ENCODE measurements at regions of chr15 and their contacts with region 1.

Region 1: GRCh38 chr15:51737280-51738017 is at the start of gene LYSMD2:
- DNase-seq: peak; percentile 56 to 79 (median 75)
- H3K4me3 ChIP-seq: peak within 1 kb of the TSS; percentile 78
- H3K4me3 Mint-ChIP-seq: peak within 1 kb of the TSS; percentile 89 to 97 (median 94)
- H3K27ac ChIP-seq: peak within 1 kb of the TSS; percentile 71
- H3K27ac Mint-ChIP-seq: peak within 1 kb of the TSS; percentile 95 to 99 (median 98)
- H3K4me1 ChIP-seq: peaks cover 50% of the 10 kb centered on the region
- H3K4me1 Mint-ChIP-seq: peaks cover 50 to 61% (median 58%) of the 10 kb centered on the region in 3 donors
- H3K27me3 ChIP-seq: no peaks in the 10 kb centered on the region
- H3K27me3 Mint-ChIP-seq: no peaks in the 10 kb centered on the region
- total RNA-seq, gene LYSMD2: 25.1 TPM

Region 2: DNA sequence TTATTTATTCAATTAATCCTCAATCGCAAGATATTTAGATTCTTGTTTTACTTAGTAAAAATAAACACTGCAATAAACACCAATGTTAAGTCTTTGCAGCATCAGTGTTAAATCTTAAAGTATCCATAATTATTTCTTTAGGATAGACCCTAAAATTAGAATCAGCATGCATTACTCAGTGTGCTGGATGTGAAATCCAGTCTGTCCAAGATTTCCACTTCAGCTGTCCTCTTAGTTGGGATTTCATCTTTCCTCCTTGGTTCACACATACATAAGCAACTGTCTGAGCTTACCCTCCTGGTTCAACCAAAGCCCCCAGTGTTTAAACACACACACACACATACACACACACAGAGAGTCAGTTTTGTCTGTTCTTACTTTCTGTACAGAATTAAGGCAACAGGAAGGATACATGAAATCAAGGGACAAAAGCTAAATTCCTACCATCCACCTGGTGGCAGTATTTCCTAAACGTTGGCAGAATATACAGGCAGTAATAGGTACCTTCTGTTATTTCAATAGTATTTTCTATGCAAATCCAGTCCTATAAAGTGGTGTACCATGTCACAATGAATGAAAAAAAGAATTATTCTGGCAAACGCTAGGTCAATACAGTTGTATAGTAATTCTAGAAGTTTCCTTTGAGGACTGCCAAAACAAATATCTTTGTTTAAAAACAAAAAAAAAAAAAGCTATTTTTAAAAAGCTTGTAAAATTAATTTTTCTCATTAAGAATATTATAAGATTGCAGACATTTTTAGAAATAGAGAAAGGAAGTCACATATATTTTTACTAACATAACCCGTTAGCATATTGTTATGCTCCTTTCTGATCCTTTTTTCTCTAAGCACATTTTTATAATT is 87.6 kb before region 1 on chr15:
- CTCF ChIA-PET with region 1: interaction called, 23 read pairs
- POLR2A ChIA-PET with region 1: no interaction called
- DNase-seq: peak in 4 of 5 donors; percentile 6 to 65 (median 44)
- H3K4me3 ChIP-seq: no peak overlapping the region
- H3K4me3 Mint-ChIP-seq: no peak overlapping the region
- H3K27ac ChIP-seq: no peak overlapping the region
- H3K27ac Mint-ChIP-seq: no peak overlapping the region
- H3K4me1 ChIP-seq: no peaks in the 10 kb centered on the region
- H3K4me1 Mint-ChIP-seq: no peaks in the 10 kb centered on the region
- H3K27me3 ChIP-seq: no peaks in the 10 kb centered on the region
- H3K27me3 Mint-ChIP-seq: peaks cover 0 to 5% of the 10 kb centered on the region in 2 donors

Region 3: DNA sequence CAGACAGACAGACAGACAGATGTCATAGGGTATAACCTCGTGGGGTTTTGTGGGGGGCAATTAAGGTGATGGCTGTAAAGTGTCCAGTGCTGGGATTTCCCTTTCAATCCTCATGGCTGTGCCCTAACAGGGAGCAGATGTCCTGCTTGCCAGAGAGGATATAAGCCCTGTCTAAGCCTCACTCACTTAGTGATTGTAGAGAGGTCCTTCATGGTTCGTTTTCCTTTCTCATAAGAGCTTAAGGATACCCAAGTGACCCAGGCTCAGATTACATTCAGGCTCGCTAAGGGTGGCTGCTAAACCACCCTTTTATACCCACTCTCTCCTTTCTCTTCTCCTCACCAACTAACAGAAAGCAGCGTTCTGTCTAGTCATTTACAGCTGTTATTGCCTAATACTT is 19.2 kb before region 1 on chr15:
- CTCF ChIA-PET with region 1: no interaction called
- POLR2A ChIA-PET with region 1: no interaction called
- DNase-seq: no peak
- H3K4me3 ChIP-seq: no peak overlapping the region
- H3K4me3 Mint-ChIP-seq: no peak overlapping the region
- H3K27ac ChIP-seq: no peak overlapping the region
- H3K27ac Mint-ChIP-seq: peak overlapping the region in 5 of 8 donors; percentile 24 to 91 (median 84)
- H3K4me1 ChIP-seq: no peaks in the 10 kb centered on the region
- H3K4me1 Mint-ChIP-seq: peaks cover 7 to 21% (median 8%) of the 10 kb centered on the region in 3 donors
- H3K27me3 ChIP-seq: no peaks in the 10 kb centered on the region
- H3K27me3 Mint-ChIP-seq: no peaks in the 10 kb centered on the region

Region 4: DNA sequence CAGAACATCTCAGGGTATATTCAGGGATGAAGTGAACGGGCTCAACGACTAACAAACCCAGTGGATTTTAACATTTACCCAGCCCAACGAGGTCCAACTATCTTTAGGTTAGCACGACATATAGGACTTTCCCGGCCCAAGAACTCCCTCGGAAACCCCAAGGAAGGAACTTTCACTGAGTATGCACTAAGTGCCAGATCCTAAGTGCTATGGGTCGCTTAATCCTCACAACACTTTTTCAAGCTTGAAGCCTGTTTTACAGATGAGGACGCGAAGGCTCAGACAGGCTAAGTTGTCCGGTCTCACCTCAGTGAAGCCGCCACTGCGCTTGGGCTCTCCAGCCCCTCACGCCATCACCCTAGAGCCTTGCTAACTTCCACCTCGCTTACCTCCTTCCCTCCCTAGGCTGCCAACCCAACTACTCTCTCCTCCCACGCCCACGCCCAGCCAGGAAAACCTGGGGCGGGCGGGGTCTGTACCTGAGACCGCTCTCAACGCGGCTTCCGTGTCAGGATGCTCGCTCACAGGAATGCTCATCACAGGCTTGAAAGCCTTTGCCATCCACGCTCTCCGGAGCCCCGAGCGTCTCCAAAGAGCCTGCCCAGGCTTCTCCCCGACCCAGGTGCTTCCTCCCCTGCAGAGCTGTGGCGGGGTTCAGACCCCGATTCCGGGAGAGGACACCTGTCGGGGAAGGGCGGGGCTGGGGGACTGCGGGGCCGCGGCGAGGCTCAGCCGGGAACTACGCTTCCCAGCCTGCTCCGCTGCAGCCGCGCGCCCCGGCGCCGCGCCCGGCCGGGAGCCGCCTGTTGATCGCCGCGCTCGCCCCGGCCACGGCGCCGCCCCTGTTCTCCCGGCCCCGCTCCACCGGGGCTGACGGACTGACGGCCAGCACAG is 13.6 kb after region 1 on chr15 and contains the start of gene TMOD2:
- CTCF ChIA-PET with region 1: interaction called, 13 read pairs
- POLR2A ChIA-PET with region 1: interaction called, 21 read pairs
- DNase-seq: peak; percentile 23 to 63 (median 48)
- H3K4me3 ChIP-seq: peak within 1 kb of the TSS; percentile 53
- H3K4me3 Mint-ChIP-seq: peak within 1 kb of the TSS; percentile 87 to 93 (median 88)
- H3K27ac ChIP-seq: no peak within 1 kb of the TSS
- H3K27ac Mint-ChIP-seq: peak within 1 kb of the TSS in 7 of 8 donors; percentile 55 to 93 (median 67)
- H3K4me1 ChIP-seq: peaks cover 11% of the 10 kb centered on the region
- H3K4me1 Mint-ChIP-seq: peaks cover 40 to 49% (median 47%) of the 10 kb centered on the region in 3 donors
- H3K27me3 ChIP-seq: no peaks in the 10 kb centered on the region
- H3K27me3 Mint-ChIP-seq: peaks cover 2 to 3% of the 10 kb centered on the region in 2 donors
- total RNA-seq, gene TMOD2: 8.6 to 10.0 TPM

Region 5: GRCh38 chr15:51803961-51804360 is 66.5 kb after region 1 on chr15:
- CTCF ChIA-PET with region 1: no interaction called
- POLR2A ChIA-PET with region 1: no interaction called
- DNase-seq: no peak
- H3K4me3 ChIP-seq: no peak overlapping the region
- H3K4me3 Mint-ChIP-seq: no peak overlapping the region
- H3K27ac ChIP-seq: no peak overlapping the region
- H3K27ac Mint-ChIP-seq: no peak overlapping the region
- H3K4me1 ChIP-seq: no peaks in the 10 kb centered on the region
- H3K4me1 Mint-ChIP-seq: no peaks in the 10 kb centered on the region
- H3K27me3 ChIP-seq: no peaks in the 10 kb centered on the region
- H3K27me3 Mint-ChIP-seq: no peaks in the 10 kb centered on the region

Measured in CD8-positive, alpha-beta memory T cell (primary cell).